ENCODE measurements at regions of chr17 and their contacts with region 1.

Region 1: DNA sequence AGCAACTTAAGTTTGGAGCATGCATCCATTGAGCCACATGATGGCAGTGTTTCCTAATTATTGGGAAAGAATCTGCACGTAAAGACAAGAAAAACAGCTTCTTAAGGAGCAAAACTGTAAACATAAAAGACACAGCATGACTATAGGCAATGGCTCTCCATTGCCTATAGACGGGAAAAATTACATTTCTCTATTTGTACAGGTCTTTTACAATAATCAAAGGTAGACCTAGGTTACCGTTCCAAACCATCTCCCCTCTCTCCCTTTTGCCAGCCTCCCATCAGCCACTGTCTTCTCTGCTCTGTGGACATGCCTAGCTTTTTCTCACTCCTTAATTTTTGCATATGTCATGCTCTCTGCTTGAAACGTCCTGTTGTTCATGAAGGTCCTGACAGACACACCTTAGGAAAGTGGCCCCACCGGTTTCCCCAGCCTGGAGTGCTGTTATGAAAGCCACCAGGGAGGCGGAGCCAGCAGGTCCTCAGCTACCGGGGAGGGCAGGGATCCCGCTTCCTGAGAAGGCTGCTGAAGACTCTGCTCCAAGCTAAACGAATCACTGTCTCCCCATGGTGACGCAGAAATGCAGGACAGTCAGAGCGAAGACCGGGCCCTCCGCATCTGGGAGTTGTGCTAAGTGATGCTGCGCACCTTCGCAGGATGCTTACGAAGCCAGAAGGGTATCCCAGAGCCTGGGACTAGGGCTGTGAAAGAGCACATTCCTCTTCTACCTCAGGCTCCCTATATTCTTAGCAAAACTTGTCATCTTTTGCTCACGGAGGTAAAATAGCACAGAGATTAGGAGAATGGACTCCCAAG is 2.2 kb upstream of the SLC16A11 start:
- DNase-seq: peak; percentile 25 to 66 (median 64)
- H3K4me3 ChIP-seq: peak overlapping the region; percentile 67
- H3K4me3 Mint-ChIP-seq: peak overlapping the region; percentile 78 to 93 (median 87)
- H3K27ac ChIP-seq: peak overlapping the region; percentile 53
- H3K27ac Mint-ChIP-seq: peak overlapping the region; percentile 83 to 96 (median 94)
- H3K4me1 ChIP-seq: peaks cover 30% of the 10 kb centered on the region
- H3K4me1 Mint-ChIP-seq: peaks cover 32 to 47% (median 33%) of the 10 kb centered on the region in 3 donors
- H3K27me3 ChIP-seq: no peaks in the 10 kb centered on the region
- H3K27me3 Mint-ChIP-seq: no peaks in the 10 kb centered on the region

Region 2: DNA sequence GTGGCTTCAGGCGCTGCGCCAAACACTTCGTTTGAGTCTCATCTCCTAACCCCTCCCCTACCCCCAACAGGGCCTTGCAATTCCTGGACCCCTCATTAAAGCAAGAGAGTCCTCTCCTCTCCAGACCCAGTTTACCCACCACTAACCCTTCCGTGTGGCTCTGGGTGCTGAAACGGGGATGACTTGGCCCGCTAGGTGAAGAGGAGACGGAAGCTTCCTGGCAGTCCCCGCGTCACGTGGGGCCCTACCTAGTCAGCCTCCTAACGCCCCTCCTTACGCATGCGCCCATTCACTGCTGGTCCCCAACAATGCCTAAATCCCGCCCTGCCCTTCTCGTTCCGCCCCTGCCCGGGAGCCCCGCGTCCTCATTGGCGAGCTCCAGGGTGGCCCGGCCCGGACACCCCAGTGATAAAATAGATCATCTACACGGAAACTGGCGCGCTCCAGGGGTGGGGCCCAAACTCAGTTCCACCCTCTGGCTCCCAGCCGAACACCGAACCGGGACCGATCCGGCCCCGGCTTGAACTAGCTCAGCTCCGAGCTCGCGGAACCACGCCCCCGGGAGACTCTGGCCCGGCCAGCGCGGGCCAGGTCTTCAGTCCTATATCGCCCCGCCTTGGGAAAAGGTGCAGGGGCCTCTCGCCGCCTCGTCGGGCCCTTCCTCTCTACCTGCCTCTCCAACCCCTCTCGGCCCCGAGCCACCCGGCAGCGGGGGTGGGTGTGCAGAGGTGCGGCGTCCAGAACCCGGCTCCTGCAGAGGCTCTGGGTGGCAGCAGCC is 10.3 kb before region 1 on chr17 and contains the start of gene SLC16A13:
- CTCF ChIA-PET with region 1: interaction called, 14 read pairs
- POLR2A ChIA-PET with region 1: interaction called, 21 read pairs
- DNase-seq: peak; percentile 96 to 99 (median 98)
- H3K4me3 ChIP-seq: peak within 1 kb of the TSS; percentile 99
- H3K4me3 Mint-ChIP-seq: peak within 1 kb of the TSS; percentile 86 to 98 (median 94)
- H3K27ac ChIP-seq: peak within 1 kb of the TSS; percentile 98
- H3K27ac Mint-ChIP-seq: peak within 1 kb of the TSS; percentile 95 to 99 (median 98)
- H3K4me1 ChIP-seq: peaks cover 52% of the 10 kb centered on the region
- H3K4me1 Mint-ChIP-seq: peaks cover 45 to 65% (median 52%) of the 10 kb centered on the region in 3 donors
- H3K27me3 ChIP-seq: no peaks in the 10 kb centered on the region
- H3K27me3 Mint-ChIP-seq: no peaks in the 10 kb centered on the region
- total RNA-seq, gene SLC16A13: 7.7 to 8.1 TPM

Region 3: GRCh38 chr17:7072406-7072805 is 26.3 kb after region 1 on chr17:
- CTCF ChIA-PET with region 1: no interaction called
- POLR2A ChIA-PET with region 1: no interaction called
- DNase-seq: no peak
- H3K4me3 ChIP-seq: no peak overlapping the region
- H3K4me3 Mint-ChIP-seq: no peak overlapping the region
- H3K27ac ChIP-seq: no peak overlapping the region
- H3K27ac Mint-ChIP-seq: no peak overlapping the region
- H3K4me1 ChIP-seq: no peaks in the 10 kb centered on the region
- H3K4me1 Mint-ChIP-seq: no peaks in the 10 kb centered on the region
- H3K27me3 ChIP-seq: no peaks in the 10 kb centered on the region
- H3K27me3 Mint-ChIP-seq: no peaks in the 10 kb centered on the region

Region 4: DNA sequence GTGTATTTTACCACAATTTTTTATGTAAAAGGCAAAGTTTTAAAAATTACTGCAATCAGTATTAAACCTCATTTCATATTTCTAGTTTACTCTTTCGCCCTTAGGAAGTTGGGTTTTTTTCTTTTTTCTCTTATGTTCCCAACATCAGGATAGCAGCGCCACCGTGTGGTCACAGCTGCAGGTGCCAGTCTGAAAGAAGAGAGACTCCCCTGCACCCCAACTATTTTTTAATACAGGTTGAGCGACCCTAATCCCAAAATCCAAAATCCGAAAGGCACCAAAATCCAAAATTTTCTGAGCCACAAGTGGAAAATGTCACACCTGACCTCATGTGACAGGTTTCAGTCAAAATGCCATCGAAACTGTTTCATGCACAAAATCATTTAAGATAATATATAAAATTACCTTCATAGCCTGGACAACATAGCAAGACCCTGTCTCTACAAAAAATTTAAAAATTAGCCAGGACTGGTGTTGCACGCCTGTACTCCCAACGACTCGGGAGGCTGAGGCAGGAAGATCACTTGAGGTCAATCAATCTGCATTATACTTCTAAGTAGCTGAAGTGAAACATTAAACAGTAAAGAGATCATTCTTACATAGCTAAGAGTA is 90.3 kb after region 1 on chr17:
- CTCF ChIA-PET with region 1: interaction called, 169 read pairs
- POLR2A ChIA-PET with region 1: interaction called, 16 read pairs
- DNase-seq: peak; percentile 58 to 84 (median 69)
- H3K4me3 ChIP-seq: no peak overlapping the region
- H3K4me3 Mint-ChIP-seq: no peak overlapping the region
- H3K27ac ChIP-seq: no peak overlapping the region
- H3K27ac Mint-ChIP-seq: no peak overlapping the region
- H3K4me1 ChIP-seq: peaks cover 13% of the 10 kb centered on the region
- H3K4me1 Mint-ChIP-seq: peaks cover 12 to 26% (median 17%) of the 10 kb centered on the region in 3 donors
- H3K27me3 ChIP-seq: no peaks in the 10 kb centered on the region
- H3K27me3 Mint-ChIP-seq: peaks cover 18 to 20% of the 10 kb centered on the region in 2 donors